K562 (cell line): ENCODE measurements at regions of chr2 and their contacts with region 1.

Region 1: GRCh38 chr2:149597668-149598326 is 10.2 kb upstream of the MMADHC start:
- DNase-seq: peak; percentile 63 to 73 (median 70)
- ATAC-seq: peak; percentile 97
- H3K4me3 ChIP-seq: no peak overlapping the region
- H3K27ac ChIP-seq: no peak overlapping the region
- H3K4me1 ChIP-seq: no peaks in the 10 kb centered on the region
- H3K27me3 ChIP-seq: no peaks in the 10 kb centered on the region; a peak in 1 of 5 replicates
- CTCF ChIP-seq: peak; percentile 68 to 90 (median 89)
- EP300 ChIP-seq: no peak
- POLR2A ChIP-seq: no peak
- RAD21 ChIP-seq: peak; percentile 91 to 96

Region 2: DNA sequence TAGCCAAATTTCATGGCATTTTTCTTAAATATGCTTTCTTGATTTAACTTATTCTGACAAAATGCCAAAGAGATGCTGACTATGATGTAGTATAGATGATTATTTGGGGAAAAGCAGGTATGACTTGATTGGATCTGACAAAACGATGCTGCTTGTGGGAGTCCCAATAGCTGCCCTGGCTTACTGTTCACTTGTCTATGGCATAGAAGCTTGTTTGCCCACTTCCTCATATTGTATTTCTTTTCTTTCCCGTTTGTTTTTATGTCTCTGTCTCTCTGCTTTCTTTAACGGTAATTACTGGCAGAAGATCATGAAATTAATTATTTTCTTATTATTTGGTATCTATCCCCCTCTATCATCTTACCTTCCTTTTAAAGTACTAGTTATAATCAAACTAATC is 910.3 kb before region 1 on chr2:
- CTCF ChIA-PET with region 1: no interaction called
- POLR2A ChIA-PET with region 1: no interaction called
- in situ Hi-C with region 1: no loop called
- intact Hi-C with region 1: no loop called
- DNase-seq: no peak
- ATAC-seq: no peak
- H3K4me3 ChIP-seq: no peak overlapping the region
- H3K27ac ChIP-seq: no peak overlapping the region
- H3K4me1 ChIP-seq: no peaks in the 10 kb centered on the region
- H3K27me3 ChIP-seq: no peaks in the 10 kb centered on the region
- CTCF ChIP-seq: no peak
- EP300 ChIP-seq: no peak
- POLR2A ChIP-seq: no peak
- RAD21 ChIP-seq: no peak

Region 3: GRCh38 chr2:149954981-149955600 is 357.3 kb after region 1 on chr2:
- CTCF ChIA-PET with region 1: no interaction called
- POLR2A ChIA-PET with region 1: no interaction called
- in situ Hi-C with region 1: no loop called
- intact Hi-C with region 1: no loop called
- DNase-seq: no peak
- ATAC-seq: no peak
- H3K4me3 ChIP-seq: no peak overlapping the region
- H3K27ac ChIP-seq: no peak overlapping the region
- H3K4me1 ChIP-seq: no peaks in the 10 kb centered on the region
- H3K27me3 ChIP-seq: no peaks in the 10 kb centered on the region
- CTCF ChIP-seq: no peak
- EP300 ChIP-seq: no peak
- POLR2A ChIP-seq: no peak
- RAD21 ChIP-seq: no peak

Region 4: DNA sequence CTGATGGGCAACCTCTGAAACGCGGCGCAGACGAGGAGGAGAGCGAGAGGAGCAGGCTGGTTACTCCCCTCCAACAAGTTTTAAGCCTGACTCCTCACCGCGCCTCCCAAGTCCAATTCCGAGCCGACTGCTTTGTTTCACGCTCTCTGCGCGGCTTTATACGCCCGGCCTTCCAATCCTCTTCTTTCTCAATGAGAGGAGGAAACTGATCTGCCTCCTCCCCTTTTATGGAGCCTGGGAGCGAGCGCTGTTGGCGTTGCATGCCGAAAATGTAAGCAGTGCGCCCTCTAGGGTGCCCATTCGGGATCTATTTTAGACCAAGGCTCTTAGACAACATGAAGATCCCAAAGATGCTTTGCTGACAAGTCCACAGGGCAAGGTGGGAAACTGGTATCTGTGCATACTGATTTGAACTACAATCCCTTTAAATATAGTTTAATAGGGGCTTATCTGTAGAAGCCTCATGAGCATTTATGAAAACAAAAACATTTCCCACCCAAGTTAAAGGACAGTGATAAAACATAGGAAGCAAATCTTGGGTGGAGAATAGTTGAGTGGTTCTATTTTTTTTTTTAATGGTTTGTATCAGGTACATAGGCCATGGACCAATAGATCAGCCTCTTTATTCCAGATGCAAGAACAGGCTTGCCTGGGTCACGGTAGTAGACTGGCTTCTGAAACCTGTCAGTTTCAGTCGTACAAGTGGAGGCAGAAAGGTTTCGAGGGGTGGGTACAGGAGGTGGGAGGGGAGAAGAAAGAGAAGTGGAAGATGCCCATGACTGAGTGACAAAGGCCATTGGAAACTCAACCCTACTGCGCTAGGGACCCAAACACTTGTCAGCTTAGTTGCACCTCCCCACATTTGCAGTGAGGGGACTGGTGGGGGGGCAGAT is 890.0 kb after region 1 on chr2 and contains the start of gene RND3:
- CTCF ChIA-PET with region 1: interaction called, 3 read pairs
- POLR2A ChIA-PET with region 1: no interaction called
- in situ Hi-C with region 1: loop called (anchors 25 kb)
- intact Hi-C with region 1: loop called (anchors 1 kb)
- DNase-seq: peak; percentile 58 to 76 (median 66)
- ATAC-seq: peak; percentile 92
- H3K4me3 ChIP-seq: no peak within 1 kb of the TSS
- H3K27ac ChIP-seq: no peak within 1 kb of the TSS
- H3K4me1 ChIP-seq: peaks cover 0 to 8% of the 10 kb centered on the region in 2 experiments; a peak in 1 of 5 replicates
- H3K27me3 ChIP-seq: 0 out of 5 replicates have a peak, but pooled peaks cover 0 to 6% of the 10 kb centered on the region in 2 experiments
- CTCF ChIP-seq: peak; percentile 55 to 74 (median 67)
- EP300 ChIP-seq: no peak
- POLR2A ChIP-seq: no peak
- RAD21 ChIP-seq: peak; percentile 79 to 83
- polyA plus RNA-seq, gene RND3: not detected

Region 5: DNA sequence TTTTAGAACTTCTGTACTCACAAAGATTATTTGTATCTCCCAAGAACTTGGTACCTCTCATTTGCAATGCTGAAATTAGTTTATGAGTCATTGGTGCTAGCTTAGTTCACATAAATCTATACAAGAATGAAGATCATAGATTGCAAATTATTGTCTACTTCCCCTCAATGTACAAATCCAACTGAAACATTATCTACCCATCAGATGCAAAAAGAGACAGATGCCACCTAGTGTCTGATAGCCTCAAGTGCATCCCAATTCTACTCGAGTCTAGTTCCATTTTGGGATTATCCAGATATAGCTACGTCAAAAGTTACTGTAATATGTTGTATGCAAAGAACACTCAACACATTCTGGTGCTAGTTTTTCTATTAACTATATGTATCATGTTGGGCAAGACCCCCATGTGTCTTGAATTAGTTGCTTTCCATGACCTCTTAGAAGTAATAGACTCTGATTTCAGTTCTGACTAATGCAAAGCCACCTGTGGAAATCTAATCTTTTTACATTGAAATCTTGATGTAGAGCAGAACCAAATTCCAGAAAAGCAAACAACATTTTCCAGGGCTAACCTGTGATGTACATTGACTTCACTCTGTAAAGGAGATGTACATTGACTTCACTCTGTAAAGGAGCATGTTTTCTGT is 1453.9 kb after region 1 on chr2:
- CTCF ChIA-PET with region 1: interaction called, 7 read pairs
- POLR2A ChIA-PET with region 1: no interaction called
- in situ Hi-C with region 1: no loop called
- intact Hi-C with region 1: loop called (anchors 1 kb)
- DNase-seq: peak; percentile 42 to 50 (median 45)
- ATAC-seq: peak; percentile 82
- H3K4me3 ChIP-seq: no peak overlapping the region
- H3K27ac ChIP-seq: no peak overlapping the region
- H3K4me1 ChIP-seq: no peaks in the 10 kb centered on the region
- H3K27me3 ChIP-seq: no peaks in the 10 kb centered on the region
- CTCF ChIP-seq: peak; percentile 26 to 74 (median 72); a peak in 5 of 6 replicates
- EP300 ChIP-seq: no peak
- POLR2A ChIP-seq: no peak
- RAD21 ChIP-seq: peak; percentile 62 to 84

Region 6: DNA sequence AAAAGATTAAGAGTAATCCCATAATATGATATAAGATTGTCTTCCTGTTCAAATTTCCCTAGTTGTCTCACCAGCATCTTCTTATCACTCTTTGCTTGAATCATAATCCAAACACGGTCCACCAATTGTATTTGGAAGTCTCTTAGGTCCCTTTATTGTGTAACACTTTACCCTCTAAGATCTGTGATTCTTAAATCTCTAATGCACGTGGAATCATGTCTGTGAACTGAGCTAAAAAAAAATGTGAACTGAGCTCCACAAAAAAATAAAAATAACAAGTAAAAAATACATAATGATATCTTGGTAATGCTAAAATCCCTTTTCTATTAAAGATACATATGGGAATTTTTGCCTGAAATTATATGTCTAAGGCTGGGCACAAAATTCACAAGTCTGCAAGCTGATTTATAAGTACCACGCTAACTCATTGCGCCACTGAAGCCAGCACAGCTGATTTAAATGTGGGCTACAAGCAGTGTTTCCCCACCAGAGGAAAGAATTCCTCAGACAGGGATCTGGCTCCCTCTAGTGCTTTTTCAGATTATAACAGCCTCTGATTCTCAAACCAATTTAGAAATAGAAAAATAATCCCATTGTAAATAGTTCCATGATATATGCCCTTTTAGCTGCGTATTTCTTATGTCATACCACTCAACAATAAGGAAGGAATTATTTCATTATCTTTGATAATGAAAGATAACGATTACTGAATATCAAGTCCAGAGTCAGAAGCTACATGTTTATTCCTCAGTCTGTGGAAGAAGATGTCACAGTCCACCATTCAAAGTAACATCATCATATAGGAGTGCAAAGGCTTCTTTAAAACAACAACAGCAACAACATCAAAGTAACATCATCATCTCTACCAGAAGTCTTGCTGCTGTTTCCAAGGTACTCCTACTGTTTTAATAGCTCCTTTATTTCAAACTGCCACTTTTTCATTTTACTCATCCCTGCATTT is 1641.0 kb after region 1 on chr2:
- CTCF ChIA-PET with region 1: interaction called, 19 read pairs
- POLR2A ChIA-PET with region 1: interaction called, 4 read pairs
- in situ Hi-C with region 1: loop called (anchors 5 kb)
- intact Hi-C with region 1: loop called (anchors 1 kb)
- DNase-seq: peak; percentile 62 to 73 (median 67)
- ATAC-seq: peak; percentile 81
- H3K4me3 ChIP-seq: no peak overlapping the region
- H3K27ac ChIP-seq: no peak overlapping the region
- H3K4me1 ChIP-seq: no peaks in the 10 kb centered on the region
- H3K27me3 ChIP-seq: peaks cover 2 to 4% of the 10 kb centered on the region in 2 experiments; a peak in 2 of 5 replicates
- CTCF ChIP-seq: peak; percentile 79 to 95 (median 85)
- EP300 ChIP-seq: no peak
- POLR2A ChIP-seq: no peak
- RAD21 ChIP-seq: peak; percentile 94 to 96